Lower leg skin (tissue), 4 donors: ENCODE measurements at regions of chr15 and their contacts with region 1.

Region 1: DNA sequence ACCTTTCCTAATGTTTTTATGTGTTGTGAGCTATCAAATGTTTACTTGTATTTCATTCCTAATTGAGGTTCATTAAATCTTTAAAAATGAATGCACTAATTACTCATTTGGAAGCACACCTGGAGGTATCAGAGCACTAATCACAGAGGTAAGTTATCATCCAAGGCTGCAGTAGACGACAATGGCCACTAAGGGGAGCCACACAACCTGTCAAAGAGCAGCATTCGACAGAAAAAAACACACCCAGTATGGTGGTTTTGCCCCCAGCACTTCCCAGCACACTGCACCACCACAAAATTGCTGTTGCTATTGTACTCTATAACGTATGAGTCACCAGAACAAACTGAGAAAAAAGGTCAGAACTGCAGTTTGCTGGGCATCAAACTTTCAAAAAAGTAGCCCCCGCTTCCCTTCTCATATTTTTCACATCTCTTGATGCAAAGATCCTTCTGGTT is 205.9 kb upstream of the IGF1R start:
- DNase-seq: peak; percentile 50 to 85
- H3K4me3 ChIP-seq: no peak overlapping the region
- CTCF ChIP-seq: peak in 1 of 3 donors; percentile 29
- POLR2A ChIP-seq: no peak

Region 2: DNA sequence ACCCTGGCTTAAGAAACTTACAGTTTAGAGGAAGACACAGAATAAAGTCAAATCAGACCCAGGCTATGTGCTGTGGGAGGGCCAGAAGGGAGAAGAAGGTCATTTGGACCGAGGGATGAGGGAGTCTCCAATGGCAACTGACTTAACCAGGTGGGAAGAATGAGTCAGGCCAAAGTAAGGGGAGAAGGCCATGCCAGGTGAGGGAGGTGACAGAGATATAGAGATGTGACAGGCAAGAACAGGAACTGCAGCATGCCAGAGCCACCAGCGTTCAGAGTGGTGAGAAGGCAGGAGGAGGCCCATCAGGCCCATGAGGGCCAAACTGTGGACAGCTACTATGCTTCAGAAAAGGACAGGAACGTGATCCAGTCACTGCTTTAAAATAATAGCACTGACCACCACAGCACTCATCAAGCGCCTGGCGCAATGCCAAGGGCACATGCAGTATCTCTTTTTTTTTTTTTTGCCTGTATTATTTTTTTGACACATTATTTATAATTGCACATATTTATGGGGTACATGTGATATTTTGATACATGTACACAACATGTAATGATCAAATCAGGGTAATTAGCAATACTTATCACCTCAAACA is 51.6 kb after region 1 on chr15:
- intact Hi-C with region 1: no loop called
- DNase-seq: no peak
- H3K4me3 ChIP-seq: no peak overlapping the region
- CTCF ChIP-seq: no peak
- POLR2A ChIP-seq: no peak

Region 3: GRCh38 chr15:99076552-99077308 is 634.3 kb after region 1 on chr15:
- intact Hi-C with region 1: loop called (anchors 10 kb)
- DNase-seq: peak; percentile 58 to 86
- H3K4me3 ChIP-seq: no peak overlapping the region
- CTCF ChIP-seq: peak in 1 of 3 donors; percentile 58
- POLR2A ChIP-seq: no peak